Endothelial cell of umbilical vein (primary cell): ENCODE measurements at regions of chr1 and their contacts with region 1.

Region 1: GRCh38 chr1:6343506-6344405 is 49.8 kb downstream of the ACOT7 start:
- DNase-seq: peak; percentile 67
- H3K4me3 ChIP-seq: no peak overlapping the region
- H3K27ac ChIP-seq: no peak overlapping the region
- H3K4me1 ChIP-seq: peaks cover 7% of the 10 kb centered on the region
- H3K27me3 ChIP-seq: no peaks in the 10 kb centered on the region
- CTCF ChIP-seq: peak; percentile 89 to 94
- POLR2A ChIP-seq: no peak

Region 2: DNA sequence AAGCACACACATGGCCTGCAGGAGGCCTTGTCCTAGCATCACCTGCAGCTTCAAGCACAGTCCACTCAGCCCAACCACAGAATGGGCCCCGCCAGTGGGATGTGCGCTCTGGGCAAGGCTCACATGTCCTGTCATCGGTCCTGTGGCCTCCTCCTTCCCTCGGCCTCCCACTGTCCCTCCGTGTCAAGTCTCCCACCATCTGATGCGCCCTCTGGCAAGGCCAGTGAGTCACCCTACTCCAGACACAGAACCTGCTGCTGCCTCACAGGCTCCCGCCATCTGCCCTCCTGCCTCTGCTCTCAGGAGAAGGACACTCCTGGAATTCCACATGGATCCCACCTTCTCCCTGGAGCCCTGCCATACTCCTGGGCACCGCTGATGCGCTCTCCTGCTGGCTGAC is 283.9 kb before region 1 on chr1:
- CTCF ChIA-PET with region 1: interaction called, 3 read pairs
- POLR2A ChIA-PET with region 1: no interaction called
- dilution Hi-C with region 1: no loop called
- intact Hi-C with region 1: loop called (anchors 5 kb)
- DNase-seq: no peak
- H3K4me3 ChIP-seq: no peak overlapping the region
- H3K27ac ChIP-seq: no peak overlapping the region
- H3K4me1 ChIP-seq: peaks cover 10% of the 10 kb centered on the region
- H3K27me3 ChIP-seq: no peaks in the 10 kb centered on the region
- CTCF ChIP-seq: no peak
- POLR2A ChIP-seq: no peak

Region 3: DNA sequence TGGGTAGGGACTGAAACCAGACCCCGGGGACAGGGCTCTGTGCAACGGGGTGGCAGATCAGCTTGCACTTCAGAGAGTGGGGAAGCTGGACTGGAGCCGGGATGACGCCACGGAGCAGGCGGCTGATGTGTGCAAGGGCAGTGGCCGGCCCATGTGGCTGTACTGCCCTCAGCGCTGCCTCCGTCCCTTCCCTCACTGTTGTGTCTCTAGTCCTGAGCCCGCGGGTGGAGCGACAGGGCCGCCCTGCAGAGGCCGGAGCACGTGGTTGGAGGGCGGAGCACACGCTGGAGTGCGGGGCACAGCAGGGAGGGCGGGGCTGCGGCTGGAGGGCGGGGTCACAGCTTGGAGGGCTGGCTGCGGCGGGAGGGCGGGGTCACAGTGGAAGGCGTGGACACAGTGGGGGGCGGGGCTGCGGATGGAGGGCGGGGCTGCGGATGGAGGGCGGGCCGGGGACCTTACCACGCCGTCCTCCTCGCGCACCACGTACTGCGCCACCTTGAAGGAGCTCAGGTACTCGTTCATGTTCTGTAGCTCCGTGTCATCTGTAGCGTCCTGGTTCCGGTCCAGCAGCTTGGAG is 216.1 kb before region 1 on chr1:
- CTCF ChIA-PET with region 1: no interaction called
- POLR2A ChIA-PET with region 1: no interaction called
- dilution Hi-C with region 1: no loop called
- intact Hi-C with region 1: no loop called
- DNase-seq: peak; percentile 56
- H3K4me3 ChIP-seq: no peak overlapping the region
- H3K27ac ChIP-seq: no peak overlapping the region
- H3K4me1 ChIP-seq: no peaks in the 10 kb centered on the region
- H3K27me3 ChIP-seq: no peaks in the 10 kb centered on the region
- CTCF ChIP-seq: no peak
- POLR2A ChIP-seq: no peak

Region 4: GRCh38 chr1:6199298-6200187 is 144.2 kb before region 1 on chr1 and contains the start of gene RPL22:
- CTCF ChIA-PET with region 1: interaction called, 10 read pairs
- POLR2A ChIA-PET with region 1: no interaction called
- dilution Hi-C with region 1: no loop called
- intact Hi-C with region 1: loop called (anchors 2 kb)
- DNase-seq: peak; percentile 98
- H3K4me3 ChIP-seq: peak within 1 kb of the TSS; percentile 78 to 90 (median 82)
- H3K27ac ChIP-seq: peak within 1 kb of the TSS; percentile 66
- H3K4me1 ChIP-seq: peaks cover 17% of the 10 kb centered on the region
- H3K27me3 ChIP-seq: no peaks in the 10 kb centered on the region
- CTCF ChIP-seq: no peak
- POLR2A ChIP-seq: peak; percentile 85
- total RNA-seq, gene RPL22: 343 and 372 TPM in 2 replicates

Region 5: DNA sequence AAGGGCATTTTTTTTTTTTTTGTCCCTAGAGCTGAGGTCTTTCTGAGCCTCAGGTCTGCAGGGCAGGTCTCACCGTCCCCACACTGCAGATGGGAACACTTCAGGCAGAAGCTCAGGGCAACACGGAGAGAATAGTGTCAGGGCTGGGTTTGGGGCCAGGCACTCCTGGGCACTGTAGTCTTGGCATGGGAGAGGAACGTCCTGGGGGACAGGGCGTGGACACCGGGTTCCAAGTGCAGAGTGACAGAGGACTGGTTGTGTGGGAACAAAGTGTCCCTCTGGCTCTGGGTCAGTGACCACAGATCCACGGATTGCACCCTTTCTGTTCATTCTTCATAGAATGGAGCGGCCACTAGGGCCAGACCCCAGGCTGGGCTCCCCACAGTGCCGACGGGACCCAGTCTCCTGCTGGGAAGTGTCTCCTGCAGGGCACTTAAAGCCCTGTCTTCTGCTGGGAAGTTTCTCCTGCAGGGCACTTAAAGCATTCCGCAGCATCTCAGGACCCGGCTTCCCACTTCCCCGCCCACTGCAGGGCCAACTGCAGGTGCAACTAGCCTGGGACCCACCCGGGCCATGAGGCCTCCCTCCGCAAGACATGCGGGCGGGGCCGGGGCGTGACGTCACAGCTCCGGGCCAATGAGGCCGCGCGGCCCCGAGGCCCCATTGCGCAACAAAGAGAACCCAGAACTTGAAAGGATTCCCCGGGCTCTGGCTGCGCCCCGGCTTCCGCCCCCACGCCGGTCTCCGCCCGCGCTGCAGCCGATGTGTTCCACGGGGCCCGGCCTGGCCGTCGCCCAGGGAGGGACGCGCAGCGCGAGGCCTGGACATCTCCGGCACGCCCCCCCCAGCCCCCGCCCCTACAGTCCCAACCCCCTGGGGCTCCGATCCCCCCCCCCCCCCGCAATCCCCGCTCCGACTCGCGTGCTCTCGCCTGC is 84.0 kb before region 1 on chr1:
- CTCF ChIA-PET with region 1: interaction called, 3 read pairs
- POLR2A ChIA-PET with region 1: no interaction called
- dilution Hi-C with region 1: no loop called
- intact Hi-C with region 1: loop called (anchors 5 kb)
- DNase-seq: peak; percentile 64
- H3K4me3 ChIP-seq: peak overlapping the region in 2 of 3 experiments; percentile 34 to 55
- H3K27ac ChIP-seq: no peak overlapping the region
- H3K4me1 ChIP-seq: no peaks in the 10 kb centered on the region
- H3K27me3 ChIP-seq: no peaks in the 10 kb centered on the region
- CTCF ChIP-seq: no peak
- POLR2A ChIP-seq: no peak

Region 6: DNA sequence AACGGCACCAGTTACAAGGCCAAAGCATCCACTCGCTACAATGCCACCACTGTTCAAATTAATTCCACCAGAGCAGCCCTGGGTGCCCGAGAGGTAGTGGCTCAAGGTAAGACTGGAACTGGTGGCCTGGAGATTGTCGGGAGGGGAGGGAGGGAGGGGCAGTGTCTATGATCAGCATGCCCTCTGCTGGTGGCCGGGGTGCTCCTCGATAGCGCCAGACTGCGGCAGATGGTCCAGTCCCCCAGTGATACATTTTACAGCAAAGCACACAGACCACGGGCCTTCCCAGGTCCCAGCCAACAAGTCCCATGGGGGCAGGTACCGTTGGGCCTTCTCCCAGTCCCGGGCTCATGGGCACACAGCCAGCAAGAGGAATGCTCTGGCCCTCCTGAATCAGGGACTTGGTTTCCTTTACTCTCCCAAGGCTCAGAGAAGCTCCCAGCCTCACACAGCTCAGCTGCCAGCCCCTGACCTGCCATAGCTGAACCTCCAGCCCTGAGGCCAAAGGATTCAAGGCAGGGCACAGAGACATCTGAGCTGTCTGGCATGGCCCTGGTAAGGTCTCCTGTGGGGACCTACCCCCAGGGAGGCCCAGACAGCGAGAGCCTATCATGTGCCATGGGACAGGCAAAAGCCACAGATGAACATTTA is 34.5 kb after region 1 on chr1:
- CTCF ChIA-PET with region 1: no interaction called
- POLR2A ChIA-PET with region 1: no interaction called
- dilution Hi-C with region 1: no loop called
- intact Hi-C with region 1: no loop called
- DNase-seq: no peak
- H3K4me3 ChIP-seq: no peak overlapping the region
- H3K27ac ChIP-seq: no peak overlapping the region
- H3K4me1 ChIP-seq: no peaks in the 10 kb centered on the region
- H3K27me3 ChIP-seq: no peaks in the 10 kb centered on the region
- CTCF ChIP-seq: peak in 1 of 2 donors; percentile 21
- POLR2A ChIP-seq: no peak

Region 7: GRCh38 chr1:6393400-6394187 is 49.8 kb after region 1 on chr1 and contains the start of gene ACOT7:
- CTCF ChIA-PET with region 1: interaction called, 16 read pairs
- POLR2A ChIA-PET with region 1: interaction called, 6 read pairs
- dilution Hi-C with region 1: no loop called
- intact Hi-C with region 1: loop called (anchors 1 kb)
- DNase-seq: peak; percentile 89
- H3K4me3 ChIP-seq: peak within 1 kb of the TSS; percentile 45 to 71 (median 63)
- H3K27ac ChIP-seq: peak within 1 kb of the TSS; percentile 57
- H3K4me1 ChIP-seq: peaks cover 16% of the 10 kb centered on the region
- H3K27me3 ChIP-seq: no peaks in the 10 kb centered on the region
- CTCF ChIP-seq: peak in 1 of 2 donors; percentile 24
- POLR2A ChIP-seq: peak; percentile 44
- total RNA-seq, gene ACOT7: 69.4 and 76.5 TPM in 2 replicates

Region 8: DNA sequence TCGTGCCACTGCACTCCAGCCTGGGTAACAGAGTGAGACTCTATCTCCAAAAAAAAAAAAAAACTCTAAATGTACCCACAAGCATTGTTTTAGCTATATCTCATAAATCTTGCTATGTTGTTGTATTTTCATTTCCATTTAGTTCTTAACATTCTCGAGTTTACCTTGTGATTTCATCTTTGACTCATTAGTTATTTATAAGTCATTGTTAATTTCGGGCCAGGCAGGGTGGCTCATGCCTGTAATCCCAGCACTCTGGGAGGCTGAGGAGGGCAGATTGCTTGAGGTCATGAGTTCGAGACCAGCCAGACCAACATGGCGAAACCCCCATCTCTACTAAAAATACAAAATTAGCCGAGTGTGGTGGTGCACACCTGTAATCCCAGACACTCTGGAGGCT is 64.3 kb after region 1 on chr1:
- CTCF ChIA-PET with region 1: interaction called, 38 read pairs
- POLR2A ChIA-PET with region 1: no interaction called
- dilution Hi-C with region 1: no loop called
- intact Hi-C with region 1: loop called (anchors 1 kb)
- DNase-seq: no peak
- H3K4me3 ChIP-seq: no peak overlapping the region
- H3K27ac ChIP-seq: no peak overlapping the region
- H3K4me1 ChIP-seq: peaks cover 4% of the 10 kb centered on the region
- H3K27me3 ChIP-seq: no peaks in the 10 kb centered on the region
- CTCF ChIP-seq: no peak
- POLR2A ChIP-seq: no peak

Region 9: GRCh38 chr1:6438047-6438525 is 94.3 kb after region 1 on chr1:
- CTCF ChIA-PET with region 1: interaction called, 68 read pairs
- POLR2A ChIA-PET with region 1: no interaction called
- dilution Hi-C with region 1: no loop called
- intact Hi-C with region 1: loop called (anchors 1 kb)
- DNase-seq: peak; percentile 57
- H3K4me3 ChIP-seq: no peak overlapping the region
- H3K27ac ChIP-seq: no peak overlapping the region
- H3K4me1 ChIP-seq: no peaks in the 10 kb centered on the region
- H3K27me3 ChIP-seq: peaks cover 0 to 2% of the 10 kb centered on the region in 2 experiments
- CTCF ChIP-seq: peak; percentile 88 to 94
- POLR2A ChIP-seq: no peak

Region 10: DNA sequence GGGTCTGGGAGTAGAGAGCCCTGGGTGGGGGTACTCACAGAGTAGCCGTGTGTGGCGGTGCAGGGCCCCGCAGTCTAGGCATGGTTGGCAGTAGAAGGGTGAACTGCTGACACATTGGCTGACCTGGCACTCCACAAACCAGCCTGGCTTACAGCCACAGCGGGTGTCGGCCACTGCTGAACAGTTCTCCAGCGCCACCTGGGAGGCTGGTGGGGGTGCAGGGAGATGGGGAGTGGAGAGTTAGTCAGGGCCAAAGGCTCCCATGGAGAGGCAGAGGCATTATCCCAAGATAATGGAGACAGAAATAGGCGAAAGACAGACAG is 120.7 kb after region 1 on chr1:
- CTCF ChIA-PET with region 1: no interaction called
- POLR2A ChIA-PET with region 1: no interaction called
- dilution Hi-C with region 1: no loop called
- intact Hi-C with region 1: no loop called
- DNase-seq: no peak
- H3K4me3 ChIP-seq: no peak overlapping the region
- H3K27ac ChIP-seq: no peak overlapping the region
- H3K4me1 ChIP-seq: no peaks in the 10 kb centered on the region
- H3K27me3 ChIP-seq: no peaks in the 10 kb centered on the region
- CTCF ChIP-seq: no peak
- POLR2A ChIP-seq: no peak

Region 11: DNA sequence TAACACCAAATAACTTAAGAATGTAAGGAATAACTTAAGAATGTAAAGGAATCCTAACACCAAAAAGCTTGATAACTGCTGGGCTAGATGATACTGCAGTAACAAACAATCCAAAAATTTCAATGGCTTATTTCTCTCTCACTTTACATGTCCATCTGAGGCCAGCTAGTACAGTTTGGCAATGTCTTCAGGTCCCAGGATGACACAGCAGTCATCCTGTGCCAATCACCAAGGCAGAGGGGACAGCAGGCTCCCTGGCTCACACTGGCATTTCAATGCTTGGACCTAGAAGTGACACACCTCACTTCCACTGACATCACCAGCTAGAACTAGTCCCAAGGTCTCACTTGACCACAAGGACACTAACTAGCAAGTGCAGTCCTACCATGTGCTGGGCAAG is 342.5 kb after region 1 on chr1:
- CTCF ChIA-PET with region 1: no interaction called
- POLR2A ChIA-PET with region 1: no interaction called
- dilution Hi-C with region 1: no loop called
- intact Hi-C with region 1: no loop called
- DNase-seq: no peak
- H3K4me3 ChIP-seq: no peak overlapping the region
- H3K27ac ChIP-seq: no peak overlapping the region
- H3K4me1 ChIP-seq: peaks cover 11% of the 10 kb centered on the region
- H3K27me3 ChIP-seq: no peaks in the 10 kb centered on the region
- CTCF ChIP-seq: no peak
- POLR2A ChIP-seq: no peak